ENCODE measurements at regions of chr11 and their contacts with region 1.

Region 1: GRCh38 chr11:111777094-111778046 is 11.2 kb upstream of the PPP2R1B start:
- DNase-seq: peak; percentile 87
- H3K4me3 ChIP-seq: peak overlapping the region; percentile 32
- H3K27ac ChIP-seq: peak overlapping the region; percentile 71
- H3K4me1 ChIP-seq: peaks cover 29% of the 10 kb centered on the region
- CTCF ChIP-seq: peak; percentile 99

Region 2: DNA sequence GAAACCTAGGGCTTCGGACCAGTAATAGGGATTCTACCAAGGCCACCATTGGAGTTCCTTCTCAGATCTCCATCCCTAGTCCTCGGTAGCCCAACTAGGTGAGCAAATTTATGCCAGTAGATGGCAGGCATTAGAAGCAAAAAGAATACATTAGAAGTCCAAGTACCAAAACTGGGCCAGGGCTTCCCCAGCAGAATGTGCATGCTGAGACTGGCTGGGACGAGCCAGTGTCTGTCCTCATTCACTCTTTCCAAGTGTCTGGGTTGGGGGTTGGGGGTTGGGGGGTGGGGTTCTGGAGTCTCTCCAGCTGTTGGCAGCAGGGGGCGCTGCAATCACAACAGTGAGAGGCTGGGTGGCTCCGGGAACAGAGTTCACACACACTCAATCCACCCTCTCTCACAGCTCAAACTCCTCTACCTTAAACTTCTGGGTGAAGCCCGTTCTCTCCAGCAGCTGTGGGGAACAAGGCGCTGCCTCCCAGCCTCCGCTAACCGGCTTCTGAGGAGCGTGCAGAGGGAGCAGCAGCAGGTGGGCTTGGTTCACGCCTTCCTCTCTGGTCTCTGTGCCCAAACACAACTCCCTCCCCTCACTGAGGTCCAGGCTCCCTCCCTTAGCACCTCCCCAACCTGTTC is 322.7 kb before region 1 on chr11:
- CTCF ChIA-PET with region 1: no interaction called
- POLR2A ChIA-PET with region 1: no interaction called
- intact Hi-C with region 1: loop called (anchors 2 kb)
- DNase-seq: peak; percentile 60
- H3K4me3 ChIP-seq: no peak overlapping the region
- H3K27ac ChIP-seq: no peak overlapping the region
- H3K4me1 ChIP-seq: peaks cover 11% of the 10 kb centered on the region
- CTCF ChIP-seq: peak; percentile 64

Region 3: GRCh38 chr11:111540114-111540936 is 237.0 kb before region 1 on chr11 and contains the start of gene LAYN:
- CTCF ChIA-PET with region 1: no interaction called
- POLR2A ChIA-PET with region 1: no interaction called
- intact Hi-C with region 1: no loop called
- DNase-seq: no peak
- H3K4me3 ChIP-seq: no peak within 1 kb of the TSS
- H3K27ac ChIP-seq: no peak within 1 kb of the TSS
- H3K4me1 ChIP-seq: no peaks in the 10 kb centered on the region
- CTCF ChIP-seq: no peak
- total RNA-seq, gene LAYN: not detected in 2 replicates

Region 4: DNA sequence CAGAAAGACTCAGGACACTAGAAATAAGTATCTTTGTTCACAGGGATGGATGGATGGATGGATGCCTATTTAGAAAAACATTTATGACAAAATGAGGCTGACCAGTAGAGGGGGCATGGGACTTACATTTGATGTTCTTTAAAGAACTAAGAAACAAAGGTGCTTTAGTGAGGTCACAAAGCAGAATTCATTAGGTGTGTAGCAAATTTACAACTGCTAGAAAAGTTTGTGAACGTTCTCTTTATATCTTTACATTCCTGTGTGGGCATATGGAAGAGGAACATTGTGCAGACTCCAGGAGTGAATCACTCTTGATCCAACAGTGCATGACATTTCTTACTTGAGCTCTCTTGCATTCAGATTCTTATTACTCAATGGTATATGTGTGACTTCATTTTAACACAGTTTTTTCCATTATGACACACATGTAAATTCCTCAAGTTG is 191.0 kb before region 1 on chr11:
- CTCF ChIA-PET with region 1: interaction called, 4 read pairs
- POLR2A ChIA-PET with region 1: interaction called, 4 read pairs
- intact Hi-C with region 1: loop called (anchors 1 kb)
- DNase-seq: peak; percentile 78
- H3K4me3 ChIP-seq: no peak overlapping the region
- H3K27ac ChIP-seq: no peak overlapping the region
- H3K4me1 ChIP-seq: peaks cover 25% of the 10 kb centered on the region
- CTCF ChIP-seq: peak; percentile 94

Region 5: DNA sequence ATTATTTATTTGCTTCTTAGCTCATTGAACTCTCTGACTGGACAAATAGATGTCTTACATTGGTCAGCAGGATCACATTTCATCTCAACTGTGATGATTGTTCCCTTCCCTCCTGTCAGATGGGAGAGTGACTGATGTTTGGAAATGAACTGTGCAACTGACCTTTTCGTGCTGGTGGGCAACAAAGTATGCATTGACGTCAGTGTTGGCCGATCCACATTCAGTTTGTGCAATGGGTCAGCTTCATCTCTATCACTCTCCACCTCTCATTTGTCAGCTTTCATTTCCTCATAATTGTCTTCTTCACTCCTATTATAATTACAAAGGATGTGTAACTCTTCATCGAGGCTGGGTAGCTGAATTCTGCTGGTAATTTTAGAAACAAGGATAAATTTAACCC is 82.5 kb before region 1 on chr11:
- CTCF ChIA-PET with region 1: no interaction called
- POLR2A ChIA-PET with region 1: interaction called, 13 read pairs
- intact Hi-C with region 1: loop called (anchors 5 kb)
- DNase-seq: peak; percentile 58
- H3K4me3 ChIP-seq: peak overlapping the region; percentile 33
- H3K27ac ChIP-seq: peak overlapping the region; percentile 94
- H3K4me1 ChIP-seq: peaks cover 68% of the 10 kb centered on the region
- CTCF ChIP-seq: no peak

Region 6: GRCh38 chr11:111766093-111766833 is 11.1 kb before region 1 on chr11 and contains the start of gene PPP2R1B:
- CTCF ChIA-PET with region 1: interaction called, 9 read pairs
- POLR2A ChIA-PET with region 1: interaction called, 52 read pairs
- intact Hi-C with region 1: no loop called
- DNase-seq: peak; percentile 74
- H3K4me3 ChIP-seq: peak within 1 kb of the TSS; percentile 88
- H3K27ac ChIP-seq: peak within 1 kb of the TSS; percentile 35
- H3K4me1 ChIP-seq: peaks cover 17% of the 10 kb centered on the region
- CTCF ChIP-seq: no peak
- total RNA-seq, gene PPP2R1B: 30.2 and 50.6 TPM in 2 replicates

Region 7: DNA sequence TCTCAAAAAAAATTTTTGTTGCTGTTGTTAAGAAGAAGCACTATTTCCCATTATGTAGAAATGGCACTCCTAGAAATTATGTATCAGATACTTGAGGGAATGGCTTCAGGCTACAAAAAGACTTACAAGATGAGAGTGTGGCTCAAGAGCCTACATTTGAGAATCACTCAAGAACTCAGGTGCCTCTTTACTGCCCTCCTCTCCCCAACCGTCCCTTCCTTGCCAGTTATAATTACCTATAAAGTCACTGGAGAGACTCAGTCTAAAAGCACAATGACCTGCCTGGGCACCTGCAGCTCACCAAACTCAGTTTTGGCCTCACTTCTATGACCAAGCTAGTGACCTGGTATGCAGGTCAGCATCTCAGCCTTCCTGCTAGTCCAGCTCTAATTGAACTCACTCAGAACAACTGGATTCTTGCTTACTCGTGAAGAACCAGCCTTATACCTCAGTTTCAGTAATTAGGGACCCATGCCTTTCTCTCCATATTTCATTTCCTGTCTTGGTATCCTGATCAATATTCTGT is 30.8 kb after region 1 on chr11:
- CTCF ChIA-PET with region 1: no interaction called
- POLR2A ChIA-PET with region 1: no interaction called
- intact Hi-C with region 1: no loop called
- DNase-seq: no peak
- H3K4me3 ChIP-seq: no peak overlapping the region
- H3K27ac ChIP-seq: no peak overlapping the region
- H3K4me1 ChIP-seq: no peaks in the 10 kb centered on the region
- CTCF ChIP-seq: no peak

Measured in OCI-LY7 (cell line).